Cardiac septum (tissue), 1 donor: ENCODE measurements at regions of chr15 and their contacts with region 1.

Region 1: DNA sequence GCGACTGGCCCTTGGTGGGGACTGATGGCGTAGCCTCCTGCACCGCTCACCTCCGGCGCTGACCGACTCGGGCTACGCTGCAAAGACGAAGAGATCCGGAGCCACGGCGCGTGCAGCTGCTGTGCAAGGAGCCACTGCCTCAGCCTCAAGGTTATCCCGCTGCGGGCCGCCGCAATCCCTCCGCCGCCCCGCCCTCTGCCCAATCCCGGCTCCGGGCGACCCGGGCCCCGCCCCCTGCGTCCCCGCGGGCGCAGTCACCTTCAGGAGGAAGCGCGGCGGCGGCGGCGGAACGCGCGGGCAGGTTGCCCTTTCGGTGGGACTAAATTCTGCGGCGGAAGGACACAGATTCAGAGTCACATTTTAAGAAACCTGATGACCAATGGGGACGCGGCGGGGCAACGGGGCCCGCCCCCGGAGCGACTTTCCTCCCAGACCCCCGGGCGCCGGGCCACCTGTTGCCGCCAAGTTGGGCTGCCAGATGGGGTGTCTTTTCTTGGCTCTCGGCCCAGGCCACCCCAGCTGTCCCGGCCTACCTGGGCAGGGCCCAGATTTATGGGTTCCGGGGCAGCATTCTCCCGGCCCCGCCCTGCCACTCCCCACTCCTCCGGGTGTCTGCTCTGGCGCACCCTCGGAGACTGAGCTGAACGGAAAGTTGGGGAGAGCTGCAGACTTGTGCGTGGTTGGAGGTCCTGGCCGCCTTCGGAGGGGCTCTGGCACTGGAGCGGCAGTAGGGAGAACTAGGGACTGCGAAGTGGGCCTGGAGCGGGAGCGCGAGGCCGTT is at the start of gene PKM:
- DNase-seq: peak; percentile 98
- total RNA-seq, gene PKM: 984 TPM

Region 2: DNA sequence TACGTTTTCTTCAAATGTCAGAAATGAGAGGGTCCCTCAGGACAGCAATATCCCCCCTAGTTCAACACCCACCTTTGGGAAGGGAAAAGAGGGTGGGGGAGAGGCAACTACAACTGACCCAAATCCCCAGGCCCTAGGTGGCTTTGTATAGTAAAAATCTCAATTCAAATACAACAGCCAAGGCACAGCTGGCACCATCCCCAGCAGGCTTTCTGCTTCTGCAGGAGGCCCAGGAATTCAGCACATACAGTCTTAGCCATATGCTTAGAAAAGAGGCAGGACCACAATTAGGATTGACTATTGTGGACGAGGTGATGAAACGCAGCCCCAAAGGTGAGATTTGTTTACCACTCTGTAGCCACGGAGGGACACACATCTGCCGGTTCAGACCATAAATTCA is 405.1 kb before region 1 on chr15:
- intact Hi-C with region 1: no loop called
- DNase-seq: no peak

Region 3: DNA sequence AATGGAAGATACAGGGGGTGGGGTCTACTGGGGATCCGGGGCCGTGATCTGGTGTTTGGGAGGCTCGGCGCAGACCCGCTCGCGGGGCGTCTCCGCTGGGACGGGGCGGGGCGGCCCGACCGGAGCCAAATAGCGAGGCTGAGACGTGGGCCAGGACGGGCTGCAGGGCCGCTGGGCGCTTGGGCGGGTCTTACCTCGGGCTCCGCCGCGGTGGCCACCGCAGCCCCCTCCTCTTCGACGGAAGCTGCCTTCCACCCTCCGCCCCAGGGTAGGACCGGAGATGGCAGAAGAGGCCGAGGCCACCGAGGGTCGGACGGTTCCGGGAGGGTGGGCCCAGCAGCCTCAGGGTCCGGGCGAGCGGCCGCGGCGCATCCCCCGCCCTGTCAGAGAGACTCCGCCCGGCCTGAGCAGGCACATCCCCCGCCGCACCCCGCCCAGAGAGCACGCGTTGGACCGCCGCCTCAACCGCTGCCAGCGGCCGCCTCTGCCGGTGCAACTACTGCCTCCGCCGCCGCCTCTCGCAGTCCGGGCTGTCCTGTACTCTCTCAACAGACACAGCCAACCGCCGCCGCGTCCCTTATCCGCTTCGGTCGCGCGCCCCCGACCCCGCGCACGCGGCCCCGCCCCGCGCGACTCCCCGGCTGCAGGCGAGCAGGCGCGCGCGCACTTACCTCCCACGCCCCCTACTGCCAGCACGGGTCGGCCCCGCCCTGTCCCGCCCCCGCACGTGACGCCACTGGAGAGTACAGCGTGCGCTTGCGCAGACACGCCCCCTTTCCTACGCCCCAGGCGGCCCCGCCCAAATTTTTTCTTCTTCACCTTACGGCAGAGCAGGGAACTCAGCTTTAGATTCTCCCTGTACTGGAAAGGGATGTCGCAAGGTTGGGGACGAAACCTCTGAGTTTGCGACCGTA is 113.5 kb before region 1 on chr15 and contains the start of gene MYO9A:
- intact Hi-C with region 1: loop called (anchors 5 kb)
- DNase-seq: peak; percentile 100
- total RNA-seq, gene MYO9A: 31.4 TPM

Region 4: DNA sequence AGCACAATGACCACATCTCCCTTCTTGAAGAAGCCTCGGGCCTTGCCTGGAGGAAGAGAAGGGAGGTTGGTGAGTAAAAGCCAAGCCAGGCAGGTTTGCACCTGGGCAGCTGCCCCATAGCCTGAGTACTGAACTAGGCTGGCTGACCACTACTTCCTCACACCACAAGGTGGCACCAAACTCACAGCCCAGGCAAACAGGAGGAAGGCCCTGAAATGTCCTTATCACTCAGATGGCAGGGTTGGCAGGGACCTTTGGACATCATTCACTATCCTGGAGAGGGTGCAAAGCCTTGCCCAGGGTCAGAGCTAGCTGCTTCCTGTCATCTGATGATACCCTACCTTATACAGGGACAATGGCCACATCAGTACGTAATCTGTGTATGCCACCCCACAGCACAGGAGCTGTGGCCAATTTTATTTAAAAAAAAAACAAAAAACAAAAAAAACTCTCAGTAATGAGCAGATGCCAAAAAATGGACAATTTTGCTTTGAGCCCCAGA is 31.5 kb before region 1 on chr15:
- intact Hi-C with region 1: loop called (anchors 1 kb)
- DNase-seq: peak; percentile 87

Region 5: GRCh38 chr15:72272213-72273002 is 41.2 kb after region 1 on chr15 and contains the start of gene PARP6:
- intact Hi-C with region 1: loop called (anchors 1 kb)
- DNase-seq: peak; percentile 99
- total RNA-seq, gene PARP6: 34.6 TPM